ENCODE measurements at regions of chr2 and their contacts with region 1.

Region 1: DNA sequence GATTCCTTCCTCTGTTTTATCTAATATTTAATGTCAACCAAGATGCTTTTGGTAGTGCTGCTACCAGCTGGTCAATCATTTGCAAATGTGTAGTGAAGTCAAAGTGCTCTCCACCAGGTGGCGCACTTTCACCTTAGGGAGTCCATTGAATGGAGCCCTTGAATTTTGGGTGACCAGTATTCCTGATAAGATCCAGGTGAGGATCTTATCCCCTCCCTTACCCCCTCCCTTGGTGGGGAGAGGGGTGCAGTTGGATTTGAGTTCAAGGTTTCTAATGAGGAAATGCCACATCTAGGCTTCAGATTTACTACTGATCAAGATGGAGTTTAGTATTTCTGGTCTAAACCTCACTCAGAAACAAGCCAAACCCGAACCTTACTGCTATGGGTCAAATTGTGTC is 12.0 kb upstream of the E2F6 start:
- DNase-seq: peak; percentile 56
- H3K4me3 Mint-ChIP-seq: no peak overlapping the region
- H3K27ac Mint-ChIP-seq: no peak overlapping the region
- H3K4me1 Mint-ChIP-seq: no peaks in the 10 kb centered on the region
- H3K27me3 Mint-ChIP-seq: peaks cover 30% of the 10 kb centered on the region

Region 2: GRCh38 chr2:11681722-11682589 is 204.0 kb after region 1 on chr2:
- intact Hi-C with region 1: loop called (anchors 1 kb)
- DNase-seq: peak; percentile 42
- H3K4me3 Mint-ChIP-seq: no peak overlapping the region
- H3K27ac Mint-ChIP-seq: no peak overlapping the region
- H3K4me1 Mint-ChIP-seq: no peaks in the 10 kb centered on the region
- H3K27me3 Mint-ChIP-seq: peaks cover 53% of the 10 kb centered on the region

Measured in activated T-helper 1 cell treated with anti-CD3 and anti-CD28 coated beads, Interleukin-12 subunit alpha, Interleukin-12 subunit beta, Interleukin-2, Interleukin-4 antibody, amounts not matched to agents 30 ng/mL and 10 ng/mL and 1 ng/mL, durations not matched to agents 14 hours and 24 hours and 36 hours (primary cell).